Ovary (tissue), 10 donors: ENCODE measurements at regions of chr10 and their contacts with region 1.

Region 1: GRCh38 chr10:17412323-17412722 is 42.1 kb downstream of the ST8SIA6 start:
- DNase-seq: no peak
- H3K4me3 ChIP-seq: no peak overlapping the region
- H3K27ac ChIP-seq: no peak overlapping the region
- H3K4me1 ChIP-seq: no peaks in the 10 kb centered on the region
- H3K27me3 ChIP-seq: no peaks in the 10 kb centered on the region
- CTCF ChIP-seq: no peak
- EP300 ChIP-seq: no peak
- POLR2A ChIP-seq: no peak

Region 2: DNA sequence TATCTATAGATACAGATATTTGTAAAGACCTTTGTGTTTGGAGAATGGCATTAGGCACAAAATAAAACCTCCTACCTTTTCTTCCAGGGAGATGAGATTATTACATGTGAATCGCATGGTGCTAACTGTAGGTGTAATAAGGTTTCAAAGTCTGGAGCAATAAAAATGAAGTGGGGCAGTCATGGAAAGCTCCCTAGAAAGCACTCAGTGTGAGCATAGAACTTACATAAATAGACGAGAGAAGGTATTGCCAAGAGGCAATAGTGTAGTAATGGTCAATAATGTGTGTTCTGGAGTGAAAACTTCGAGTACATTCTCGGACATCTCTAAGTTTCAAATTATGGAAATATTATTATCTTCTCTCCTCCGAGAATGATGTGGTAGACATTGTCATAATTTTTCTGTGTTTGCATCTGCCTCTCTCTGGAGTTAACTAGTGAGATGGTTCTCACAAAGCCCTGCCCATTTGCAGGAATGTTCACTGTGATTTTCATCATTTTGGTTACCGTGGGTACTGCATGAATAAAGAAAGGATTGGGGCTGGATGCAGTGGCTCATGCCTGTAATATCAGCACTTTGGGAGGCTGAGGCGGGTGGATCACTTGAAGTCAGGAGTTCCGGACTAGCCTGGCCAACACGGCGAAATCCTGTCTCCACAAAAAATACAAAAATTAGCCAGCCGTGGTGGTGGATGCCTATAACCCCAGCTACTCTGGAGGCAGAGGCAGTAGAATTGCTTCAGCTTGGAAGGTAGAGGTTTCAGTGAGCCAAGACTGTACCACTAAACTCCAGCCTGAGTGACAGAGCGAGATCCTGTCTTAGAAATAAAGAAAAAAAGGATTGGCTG is 173.7 kb before region 1 on chr10:
- intact Hi-C with region 1: no loop called
- DNase-seq: peak in 1 of 5 donors; percentile 46
- H3K4me3 ChIP-seq: no peak overlapping the region
- H3K27ac ChIP-seq: peak overlapping the region in 1 of 2 donors; percentile 41
- H3K4me1 ChIP-seq: peaks cover 9% of the 10 kb centered on the region
- H3K27me3 ChIP-seq: no peaks in the 10 kb centered on the region
- CTCF ChIP-seq: peak in 1 of 3 donors; percentile 19
- EP300 ChIP-seq: no peak
- POLR2A ChIP-seq: no peak

Region 3: GRCh38 chr10:17290226-17290625 is 122.1 kb before region 1 on chr10:
- intact Hi-C with region 1: loop called in 1 of 4 experiments (anchors 10 kb)
- DNase-seq: no peak
- H3K4me3 ChIP-seq: no peak overlapping the region
- H3K27ac ChIP-seq: no peak overlapping the region
- H3K4me1 ChIP-seq: no peaks in the 10 kb centered on the region
- H3K27me3 ChIP-seq: no peaks in the 10 kb centered on the region
- CTCF ChIP-seq: peak in 2 of 3 donors; percentile 24 to 28
- EP300 ChIP-seq: no peak
- POLR2A ChIP-seq: no peak

Region 4: GRCh38 chr10:17512341-17513001 is 100.1 kb after region 1 on chr10:
- intact Hi-C with region 1: no loop called
- DNase-seq: peak in 3 of 5 donors; percentile 19 to 24 (median 24)
- H3K4me3 ChIP-seq: no peak overlapping the region
- H3K27ac ChIP-seq: no peak overlapping the region
- H3K4me1 ChIP-seq: no peaks in the 10 kb centered on the region
- H3K27me3 ChIP-seq: no peaks in the 10 kb centered on the region
- CTCF ChIP-seq: no peak
- EP300 ChIP-seq: no peak
- POLR2A ChIP-seq: no peak